Left cardiac atrium (tissue), 4 donors: ENCODE measurements at regions of chr9 and their contacts with region 1.

Region 1: DNA sequence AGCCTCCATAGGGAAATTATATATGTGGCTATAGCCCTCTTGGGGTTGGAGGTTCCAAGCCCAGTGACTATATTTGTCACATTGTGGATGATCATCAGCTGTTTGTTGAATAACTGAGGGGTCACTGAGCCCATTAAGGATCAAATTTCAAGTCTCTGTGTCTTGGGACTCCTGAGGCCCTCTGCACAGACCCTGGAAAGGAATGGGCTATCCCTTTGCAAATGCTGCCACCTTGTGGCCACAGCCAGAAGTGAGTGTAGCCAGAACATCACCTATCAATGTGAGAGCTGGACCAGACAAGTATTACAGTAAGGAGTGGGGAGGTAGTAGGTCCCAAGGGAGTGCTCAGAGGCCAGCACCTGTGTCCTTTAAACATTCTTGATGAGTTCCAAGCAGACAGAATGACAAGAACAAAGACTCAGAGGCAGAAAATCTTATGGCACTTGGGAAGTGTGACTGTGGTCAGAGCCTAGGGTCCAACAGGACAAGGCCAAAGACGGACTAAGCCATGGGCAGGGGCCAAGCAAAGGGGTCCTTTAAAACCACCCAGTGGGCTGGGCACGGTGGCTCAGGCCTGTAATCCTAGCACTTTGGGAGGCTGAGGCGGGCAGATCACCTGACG is 8.2 kb downstream of the RPP25L start:
- DNase-seq: peak; percentile 86
- ATAC-seq: peak; percentile 89 to 90

Region 2: DNA sequence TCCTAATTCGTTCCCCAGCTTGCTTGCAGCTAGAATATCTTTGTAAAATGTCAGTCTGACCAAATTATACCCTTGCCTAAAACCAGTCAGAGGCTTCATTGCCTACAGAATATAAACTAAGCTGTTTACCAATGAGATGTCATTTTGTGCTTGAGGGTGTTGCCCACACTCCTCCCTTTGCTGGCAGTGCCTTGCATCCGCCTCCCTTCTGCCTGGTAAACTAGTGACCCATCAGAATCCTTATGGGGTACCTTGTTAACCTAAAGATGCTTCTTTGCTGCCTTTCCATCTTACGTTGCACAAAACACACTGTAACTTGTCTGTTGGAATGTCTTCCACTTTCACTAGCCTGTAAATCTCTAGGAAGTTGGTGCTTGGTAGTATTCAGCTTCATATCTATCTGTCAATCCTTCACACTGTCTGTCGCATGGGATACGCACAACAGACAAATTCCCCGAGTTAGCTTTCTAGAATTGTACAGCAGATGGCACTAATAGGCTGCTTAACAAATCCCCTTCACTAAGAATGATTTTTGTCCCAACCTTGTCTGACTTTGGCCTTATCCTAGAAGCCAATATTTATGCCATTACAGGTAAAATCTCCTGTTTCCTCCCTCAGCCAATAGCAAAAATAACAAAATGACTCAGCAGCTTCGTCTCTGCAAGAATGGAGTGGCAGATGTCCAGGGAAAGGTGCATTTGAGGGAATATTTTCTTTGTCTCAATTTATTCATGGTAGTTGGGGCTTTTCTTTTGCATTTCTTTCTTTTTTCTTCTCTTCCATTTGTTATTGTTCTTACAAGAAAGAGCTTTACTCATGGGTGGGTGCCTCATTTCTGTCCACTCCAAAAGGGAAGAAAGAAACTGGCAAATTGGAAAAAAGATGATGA is 271.4 kb before region 1 on chr9:
- intact Hi-C with region 1: loop called (anchors 2 to 10 kb)
- DNase-seq: no peak
- ATAC-seq: no peak

Region 3: GRCh38 chr9:34403554-34404380 is 200.0 kb before region 1 on chr9:
- intact Hi-C with region 1: loop called in 1 of 2 experiments (anchors 5 kb)
- DNase-seq: peak; percentile 57
- ATAC-seq: peak; percentile 54 to 71

Region 4: DNA sequence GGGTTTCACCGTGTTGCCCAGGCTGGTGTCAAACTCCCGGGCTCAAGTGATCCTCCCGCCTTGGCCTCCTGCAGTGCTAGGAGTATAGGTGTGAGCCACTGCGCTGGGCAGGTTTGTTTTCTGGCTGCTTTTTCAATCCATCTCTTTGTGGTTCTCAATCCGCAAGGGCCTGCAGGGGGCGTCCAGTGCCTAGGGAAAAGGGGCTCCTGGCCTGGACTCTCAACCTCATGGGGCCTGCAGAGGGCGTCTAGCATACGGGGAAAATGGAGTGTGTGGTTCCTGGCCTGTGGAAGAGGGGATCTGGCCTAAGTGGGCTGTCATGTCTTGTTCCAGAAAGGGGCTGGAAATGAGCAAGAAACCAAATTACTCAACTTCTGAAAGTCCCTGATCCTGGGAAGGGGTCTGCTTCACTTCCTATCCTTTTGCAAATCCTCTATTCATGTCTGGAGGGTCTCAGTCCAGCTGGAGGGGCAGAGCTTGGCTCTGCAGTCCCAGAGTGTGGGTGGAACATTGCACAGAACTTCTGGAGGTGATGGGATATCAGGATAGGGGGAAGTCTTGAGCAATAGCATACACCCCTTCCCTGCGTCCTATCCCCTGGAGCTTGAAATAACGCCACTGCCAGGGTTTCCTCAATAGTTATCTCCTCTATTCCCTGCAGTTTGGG is 71.5 kb after region 1 on chr9:
- intact Hi-C with region 1: no loop called
- DNase-seq: peak; percentile 74
- ATAC-seq: peak; percentile 70 to 86